BJ (cell line): ENCODE measurements at regions of chr14 and their contacts with region 1.

Region 1: GRCh38 chr14:104723648-104724406 is at the start of gene ADSS1:
- DNase-seq: no peak
- H3K4me3 ChIP-seq: peak within 1 kb of the TSS; percentile 36
- H3K27me3 ChIP-seq: no peaks in the 10 kb centered on the region
- CTCF ChIP-seq: peak; percentile 59
- polyA plus RNA-seq, gene ADSS1: 2.9 and 4.5 TPM in 2 replicates

Region 2: DNA sequence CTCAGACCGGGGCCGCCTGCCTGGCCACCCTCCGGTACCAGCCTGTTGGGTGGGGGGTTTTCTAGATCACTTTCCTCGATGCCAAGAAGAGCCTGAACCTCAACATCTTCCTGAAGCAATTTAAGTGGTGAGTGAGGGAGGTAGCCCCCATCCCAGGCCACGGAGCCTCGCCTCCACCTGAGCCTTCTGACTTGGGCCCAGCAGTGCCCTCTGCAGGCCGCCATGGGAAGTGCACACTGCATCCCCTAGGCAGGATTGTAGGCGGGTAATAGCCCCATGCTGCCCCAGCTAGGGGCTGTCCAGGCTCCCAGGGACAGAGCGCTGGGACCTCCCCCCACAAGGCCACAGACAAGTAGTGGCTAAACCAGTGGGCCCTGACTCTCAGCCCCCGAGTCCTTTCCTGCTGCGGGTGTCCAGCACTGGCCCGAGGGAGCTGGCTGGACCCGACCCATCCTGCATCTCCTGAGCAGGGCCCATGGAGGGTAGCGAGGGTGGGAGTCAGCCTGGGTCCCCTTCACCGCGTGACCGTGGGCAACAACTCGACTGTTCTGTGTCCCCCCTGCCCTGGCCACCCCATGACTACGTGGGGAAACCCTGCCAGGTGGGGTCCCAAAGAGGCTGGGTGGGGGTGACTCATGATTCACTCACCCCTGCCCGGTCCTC is 15.1 kb before region 1 on chr14:
- CTCF ChIA-PET with region 1: interaction called, 11 read pairs
- POLR2A ChIA-PET with region 1: no interaction called
- DNase-seq: no peak
- H3K4me3 ChIP-seq: no peak overlapping the region
- H3K27me3 ChIP-seq: no peaks in the 10 kb centered on the region
- CTCF ChIP-seq: peak; percentile 98

Region 3: GRCh38 chr14:104735830-104736642 is 12.2 kb after region 1 on chr14:
- CTCF ChIA-PET with region 1: interaction called, 40 read pairs
- POLR2A ChIA-PET with region 1: no interaction called
- DNase-seq: peak; percentile 29
- H3K4me3 ChIP-seq: no peak overlapping the region
- H3K27me3 ChIP-seq: no peaks in the 10 kb centered on the region
- CTCF ChIP-seq: no peak

Region 4: DNA sequence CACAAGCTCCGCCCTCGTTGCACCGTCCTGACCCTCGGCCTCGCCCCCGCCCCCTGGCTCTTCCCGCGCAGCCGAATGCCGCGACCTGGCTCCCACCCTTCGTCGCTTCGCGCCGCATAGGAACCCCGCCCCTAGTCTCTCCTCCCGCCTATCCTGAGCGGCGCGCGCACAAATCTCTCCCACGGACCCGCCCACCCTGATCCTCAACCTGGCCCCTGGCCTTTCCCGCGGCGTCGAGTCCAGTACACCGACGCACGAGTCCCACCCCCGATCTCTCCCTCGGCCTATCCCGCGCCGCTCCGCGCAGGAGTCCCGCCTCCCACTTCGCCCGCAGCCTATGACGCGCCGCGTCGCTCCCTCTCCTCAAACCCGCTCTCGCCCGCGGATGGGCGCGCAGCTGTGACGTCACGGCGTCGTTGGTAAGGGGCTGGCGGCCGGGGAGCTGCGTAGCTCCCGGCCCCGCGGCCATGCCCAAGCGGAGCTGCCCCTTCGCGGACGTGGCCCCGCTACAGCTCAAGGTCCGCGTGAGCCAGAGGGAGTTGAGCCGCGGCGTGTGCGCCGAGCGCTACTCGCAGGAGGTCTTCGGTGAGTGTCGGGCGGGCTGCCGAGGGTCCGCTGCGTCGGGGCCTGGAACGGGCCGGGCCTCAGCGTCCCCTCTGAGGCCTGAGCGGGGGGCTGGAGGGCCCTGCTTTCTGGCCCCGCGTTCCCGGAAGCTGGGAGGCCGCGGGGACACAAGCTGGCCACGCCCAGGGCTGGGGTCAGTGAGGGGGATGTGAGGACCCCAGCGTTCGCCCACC is 29.1 kb after region 1 on chr14 and contains the start of gene SIVA1:
- CTCF ChIA-PET with region 1: interaction called, 49 read pairs
- POLR2A ChIA-PET with region 1: no interaction called
- DNase-seq: peak; percentile 94
- H3K4me3 ChIP-seq: peak within 1 kb of the TSS; percentile 97
- H3K27me3 ChIP-seq: no peaks in the 10 kb centered on the region
- CTCF ChIP-seq: no peak
- polyA plus RNA-seq, gene SIVA1: 83.5 and 116 TPM in 2 replicates